Ascending aorta (tissue), 2 donors: ENCODE measurements at regions of chr4 and their contacts with region 1.

Region 1: DNA sequence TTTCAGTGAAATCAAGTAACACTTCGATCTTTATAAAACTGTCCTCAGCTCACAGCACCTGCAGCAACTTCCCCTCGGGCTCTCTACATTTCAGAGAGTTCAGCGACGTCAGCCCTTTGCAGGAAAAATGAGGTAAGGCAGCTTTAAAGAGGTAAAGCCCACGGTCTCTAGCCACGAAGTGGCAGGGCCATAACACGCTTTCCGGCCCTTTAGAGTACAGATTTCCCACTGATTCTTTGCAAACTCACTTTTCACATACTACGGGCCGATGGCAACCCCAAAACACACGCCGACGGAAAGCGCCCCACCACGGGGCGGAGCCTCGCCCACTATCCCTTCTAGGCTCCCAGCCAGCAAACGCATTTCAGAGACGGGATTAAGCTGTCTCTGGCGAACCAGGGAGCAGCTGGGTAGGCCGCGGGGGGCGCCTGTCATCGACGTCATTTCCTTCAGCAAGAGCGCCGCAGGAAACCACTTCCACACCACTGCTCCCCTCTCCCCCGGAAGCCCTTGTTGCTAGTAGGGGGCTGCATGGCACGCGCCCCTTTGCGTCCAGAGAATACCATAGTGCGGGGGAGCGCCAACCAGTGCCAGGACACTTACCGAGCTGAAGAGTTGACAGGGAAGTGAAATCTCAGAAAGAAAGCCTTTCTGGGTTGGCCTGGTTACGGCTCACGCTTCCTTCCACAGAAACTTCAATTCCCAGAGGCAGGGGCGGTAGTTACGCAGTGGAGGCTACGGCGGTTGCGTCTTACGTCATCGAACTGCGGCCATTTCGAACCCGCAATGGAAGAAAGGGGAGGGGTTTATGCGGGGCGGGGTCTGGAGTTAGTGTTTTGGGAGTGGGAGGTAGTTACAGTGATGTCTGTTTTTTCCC is at the start of gene TRMT10A:
- DNase-seq: peak; percentile 85 to 99
- H3K4me3 ChIP-seq: peak within 1 kb of the TSS; percentile 75 to 79
- H3K27ac ChIP-seq: peak within 1 kb of the TSS; percentile 97
- H3K4me1 ChIP-seq: peaks cover 5 to 8% of the 10 kb centered on the region in 2 donors
- H3K27me3 ChIP-seq: no peaks in the 10 kb centered on the region
- CTCF ChIP-seq: peak in 2 of 3 experiments; percentile 23 to 24
- total RNA-seq, gene TRMT10A: not detected

Region 2: GRCh38 chr4:99324979-99325378 is 238.6 kb before region 1 on chr4:
- intact Hi-C with region 1: loop called (anchors 10 kb)
- DNase-seq: peak in 1 of 2 donors; percentile 83
- H3K4me3 ChIP-seq: no peak overlapping the region
- H3K27ac ChIP-seq: peak overlapping the region; percentile 81 to 82
- H3K4me1 ChIP-seq: peaks cover 6 to 24% of the 10 kb centered on the region in 2 donors
- H3K27me3 ChIP-seq: no peaks in the 10 kb centered on the region
- CTCF ChIP-seq: no peak

Region 3: GRCh38 chr4:99610605-99611175 is 47.1 kb after region 1 on chr4:
- intact Hi-C with region 1: loop called (anchors 2 kb)
- DNase-seq: peak in 1 of 2 donors; percentile 72
- H3K4me3 ChIP-seq: peak overlapping the region in 1 of 2 donors; percentile 41
- H3K27ac ChIP-seq: peak overlapping the region; percentile 21 to 56
- H3K4me1 ChIP-seq: peaks cover 0 to 11% of the 10 kb centered on the region in 2 donors
- H3K27me3 ChIP-seq: no peaks in the 10 kb centered on the region
- CTCF ChIP-seq: no peak

Region 4: DNA sequence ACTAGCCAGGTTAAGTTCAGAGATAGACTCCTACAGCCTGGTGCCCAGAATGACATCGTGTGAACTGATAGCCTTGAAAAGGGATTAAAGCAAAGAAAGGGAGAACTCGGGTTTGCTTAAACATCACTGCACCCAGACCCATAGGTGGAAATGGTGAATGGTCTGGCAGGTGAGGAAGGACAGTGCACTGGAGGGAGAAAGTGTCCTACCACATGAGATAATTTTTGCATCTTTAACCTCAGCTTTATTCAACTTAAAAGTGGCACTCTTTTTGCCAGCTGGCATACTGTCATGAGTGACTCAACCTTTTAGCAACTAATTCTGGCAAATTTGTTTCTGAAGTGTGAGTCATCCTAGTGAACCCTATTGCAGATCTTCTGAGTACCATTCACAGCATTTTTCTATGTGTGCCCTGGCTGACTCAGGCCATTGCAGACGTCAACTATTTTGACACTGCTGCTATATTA is 200.1 kb after region 1 on chr4:
- intact Hi-C with region 1: loop called (anchors 5 kb)
- DNase-seq: peak in 1 of 2 donors; percentile 83
- H3K4me3 ChIP-seq: no peak overlapping the region
- H3K27ac ChIP-seq: no peak overlapping the region
- H3K4me1 ChIP-seq: peaks cover 4 to 8% of the 10 kb centered on the region in 2 donors
- H3K27me3 ChIP-seq: no peaks in the 10 kb centered on the region
- CTCF ChIP-seq: no peak

Region 5: GRCh38 chr4:99885063-99885664 is 321.6 kb after region 1 on chr4:
- intact Hi-C with region 1: loop called (anchors 2 kb)
- DNase-seq: no peak
- H3K4me3 ChIP-seq: no peak overlapping the region
- H3K27ac ChIP-seq: no peak overlapping the region
- H3K4me1 ChIP-seq: no peaks in the 10 kb centered on the region
- H3K27me3 ChIP-seq: no peaks in the 10 kb centered on the region
- CTCF ChIP-seq: peak in 1 of 3 experiments; percentile 50

Region 6: GRCh38 chr4:99949034-99949998 is 385.8 kb after region 1 on chr4:
- intact Hi-C with region 1: loop called (anchors 1 kb)
- DNase-seq: peak; percentile 68 to 96
- H3K4me3 ChIP-seq: peak overlapping the region; percentile 69 to 93
- H3K27ac ChIP-seq: peak overlapping the region; percentile 97 to 99
- H3K4me1 ChIP-seq: peaks cover 0 to 12% of the 10 kb centered on the region in 2 donors
- H3K27me3 ChIP-seq: no peaks in the 10 kb centered on the region
- CTCF ChIP-seq: peak; percentile 61 to 89 (median 83)